GM12878 (cell line): ENCODE measurements at regions of chr9 and their contacts with region 1.

Region 1: DNA sequence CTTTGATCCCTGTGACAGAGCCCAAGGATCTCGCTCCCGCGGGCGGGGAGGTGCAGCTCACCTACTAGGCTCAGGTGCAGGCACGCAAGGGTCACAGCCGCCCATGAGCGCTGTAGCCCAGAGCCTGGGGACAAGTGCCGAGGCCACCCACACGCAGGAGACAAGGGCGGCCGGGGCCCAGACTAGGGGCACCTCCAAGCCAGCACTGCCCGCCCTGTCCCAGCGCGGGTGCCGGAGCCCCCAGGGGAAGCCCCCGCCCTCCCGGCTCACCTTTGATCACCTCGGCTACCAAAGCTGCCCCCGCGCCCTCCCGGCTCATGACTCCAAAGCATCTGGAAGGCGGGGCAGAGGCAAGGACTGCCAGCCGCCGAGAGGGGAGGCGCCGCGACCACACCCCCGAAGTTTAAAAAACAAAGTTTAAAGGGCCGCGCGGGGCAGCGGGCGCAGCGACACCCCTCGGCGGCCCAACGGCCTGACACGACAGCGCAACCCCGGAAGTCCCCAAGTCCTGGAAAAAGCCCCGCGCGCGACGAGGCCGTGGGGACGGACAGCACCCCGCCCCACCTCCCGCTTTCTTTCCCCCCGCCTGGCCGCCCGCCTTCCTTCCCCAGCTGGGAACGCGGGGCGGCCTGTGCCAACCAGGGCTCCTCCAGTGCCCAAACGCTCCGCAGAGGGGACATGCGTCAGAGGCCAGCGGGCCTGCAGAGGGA is 53.0 kb downstream of the CDC14B start:
- DNase-seq: no peak
- ATAC-seq: peak; percentile 91
- H3K4me3 ChIP-seq: peak overlapping the region; percentile 80
- H3K27ac ChIP-seq: peak overlapping the region; percentile 46
- H3K4me1 ChIP-seq: peaks cover 3% of the 10 kb centered on the region
- H3K27me3 ChIP-seq: no peaks in the 10 kb centered on the region
- CTCF ChIP-seq: peak; percentile 63 to 77 (median 75)
- EP300 ChIP-seq: no peak
- POLR2A ChIP-seq: peak; percentile 81
- RAD21 ChIP-seq: peak; percentile 57

Region 2: GRCh38 chr9:96441798-96442445 is 124.7 kb before region 1 on chr9:
- CTCF ChIA-PET with region 1: interaction called, 20 read pairs
- POLR2A ChIA-PET with region 1: no interaction called
- RAD21 ChIA-PET with region 1: interaction called, 13 read pairs
- SMC1A ChIA-PET with region 1: interaction called, 7 read pairs
- in situ Hi-C with region 1: no loop called
- intact Hi-C with region 1: no loop called
- DNase-seq: no peak
- ATAC-seq: peak; percentile 85
- H3K4me3 ChIP-seq: no peak overlapping the region
- H3K27ac ChIP-seq: no peak overlapping the region
- H3K4me1 ChIP-seq: no peaks in the 10 kb centered on the region
- H3K27me3 ChIP-seq: no peaks in the 10 kb centered on the region
- CTCF ChIP-seq: peak; percentile 68 to 72 (median 71)
- EP300 ChIP-seq: no peak
- POLR2A ChIP-seq: no peak
- RAD21 ChIP-seq: peak; percentile 84

Region 3: DNA sequence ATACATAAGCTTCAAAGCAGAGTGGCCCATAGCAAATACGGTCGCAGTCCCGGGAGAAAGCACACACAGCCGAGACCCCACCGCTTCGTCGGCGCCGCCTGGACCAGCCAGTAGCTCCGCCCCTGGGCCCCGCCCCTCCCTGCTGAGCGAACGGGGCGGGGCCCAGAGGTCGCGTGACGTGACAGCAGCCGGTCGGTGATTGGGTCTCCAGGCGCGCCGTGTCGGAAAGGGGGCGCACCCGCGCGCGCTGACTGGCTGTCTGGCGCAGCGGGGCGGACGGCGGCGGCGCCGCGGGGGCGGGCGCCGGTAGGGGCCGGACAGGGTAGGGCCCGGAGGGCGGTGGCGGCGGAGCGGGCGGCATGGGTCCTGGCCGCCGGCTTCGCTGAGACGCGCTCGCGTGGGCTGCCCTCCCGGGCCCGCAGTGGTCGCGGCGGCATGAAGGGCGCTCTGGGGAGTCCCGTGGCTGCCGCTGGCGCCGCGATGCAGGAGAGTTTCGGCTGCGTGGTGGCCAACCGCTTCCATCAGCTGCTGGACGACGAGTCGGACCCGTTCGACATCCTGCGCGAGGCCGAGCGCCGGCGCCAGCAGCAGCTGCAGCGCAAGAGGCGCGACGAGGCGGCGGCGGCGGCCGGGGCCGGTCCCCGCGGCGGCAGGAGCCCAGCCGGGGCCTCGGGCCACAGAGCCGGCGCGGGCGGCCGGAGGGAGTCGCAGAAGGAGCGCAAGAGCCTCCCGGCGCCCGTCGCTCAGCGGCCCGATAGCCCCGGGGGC is 116.6 kb before region 1 on chr9 and contains the start of gene HABP4:
- CTCF ChIA-PET with region 1: interaction called, 14 read pairs
- POLR2A ChIA-PET with region 1: interaction called, 11 read pairs
- RAD21 ChIA-PET with region 1: interaction called, 30 read pairs
- SMC1A ChIA-PET with region 1: interaction called, 38 read pairs
- in situ Hi-C with region 1: no loop called
- intact Hi-C with region 1: loop called (anchors 2 kb)
- DNase-seq: peak; percentile 48
- ATAC-seq: peak; percentile 99
- H3K4me3 ChIP-seq: peak within 1 kb of the TSS; percentile 68
- H3K27ac ChIP-seq: no peak within 1 kb of the TSS
- H3K4me1 ChIP-seq: peaks cover 6% of the 10 kb centered on the region
- H3K27me3 ChIP-seq: peaks cover 0 to 3% of the 10 kb centered on the region in 2 experiments; a peak in 1 of 4 replicates
- CTCF ChIP-seq: no peak
- EP300 ChIP-seq: no peak
- POLR2A ChIP-seq: peak; percentile 78
- RAD21 ChIP-seq: no peak
- polyA plus RNA-seq, gene HABP4: 4.4 to 5.7 TPM

Region 4: GRCh38 chr9:96484521-96484931 is 82.1 kb before region 1 on chr9:
- CTCF ChIA-PET with region 1: interaction called, 4 read pairs
- POLR2A ChIA-PET with region 1: interaction called, 4 read pairs
- RAD21 ChIA-PET with region 1: interaction called, 5 read pairs
- SMC1A ChIA-PET with region 1: no interaction called
- in situ Hi-C with region 1: no loop called
- intact Hi-C with region 1: loop called (anchors 2 kb)
- DNase-seq: peak; percentile 56
- ATAC-seq: peak; percentile 98
- H3K4me3 ChIP-seq: no peak overlapping the region
- H3K27ac ChIP-seq: no peak overlapping the region; the same call in 1 of the 2 replicates
- H3K4me1 ChIP-seq: peaks cover 24% of the 10 kb centered on the region
- H3K27me3 ChIP-seq: no peaks in the 10 kb centered on the region
- CTCF ChIP-seq: no peak
- EP300 ChIP-seq: peak in 1 of 2 experiments; percentile 76; a peak in 2 of 4 replicates
- POLR2A ChIP-seq: no peak
- RAD21 ChIP-seq: no peak

Region 5: DNA sequence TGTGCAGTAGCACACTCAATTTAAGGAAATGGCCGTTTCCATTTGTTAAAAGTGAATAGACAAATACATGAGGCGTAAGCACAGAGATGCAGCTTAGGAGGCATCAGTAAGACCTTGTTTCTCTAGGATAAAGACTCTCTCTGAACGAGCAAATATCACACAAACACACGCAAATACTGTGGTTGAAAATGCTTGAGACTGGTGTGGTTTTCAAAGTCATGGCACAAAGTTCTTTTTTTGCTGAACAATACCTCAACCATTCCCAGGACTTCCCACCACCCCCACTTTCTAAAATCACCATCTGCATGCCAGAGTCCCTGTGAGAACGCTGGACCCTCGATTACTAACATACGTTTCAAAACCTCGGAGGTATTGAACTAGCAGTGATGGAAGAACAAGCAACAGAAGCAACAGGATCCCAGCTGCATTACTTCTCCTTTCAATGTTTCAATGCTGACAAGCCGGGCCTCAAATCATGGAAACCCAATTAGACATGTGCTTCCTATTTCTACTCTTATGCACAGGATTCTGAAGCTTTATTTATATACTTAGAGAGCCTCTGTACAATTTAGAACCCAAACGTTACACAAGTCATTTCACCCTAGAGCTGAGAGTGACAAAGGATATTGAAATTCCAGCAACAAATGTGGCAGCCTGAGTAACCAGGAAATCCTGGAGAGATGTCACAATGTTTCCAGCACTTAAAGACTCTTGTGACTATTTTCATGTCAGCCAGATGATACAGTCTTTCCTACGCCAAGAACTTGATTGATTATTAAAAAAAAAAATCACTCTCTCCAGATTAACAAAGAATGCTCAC is 10.9 kb before region 1 on chr9:
- CTCF ChIA-PET with region 1: interaction called, 17 read pairs
- POLR2A ChIA-PET with region 1: interaction called, 4 read pairs
- RAD21 ChIA-PET with region 1: interaction called, 8 read pairs
- SMC1A ChIA-PET with region 1: interaction called, 5 read pairs
- in situ Hi-C with region 1: no loop called
- intact Hi-C with region 1: no loop called
- DNase-seq: no peak
- ATAC-seq: peak; percentile 33
- H3K4me3 ChIP-seq: no peak overlapping the region
- H3K27ac ChIP-seq: no peak overlapping the region
- H3K4me1 ChIP-seq: no peaks in the 10 kb centered on the region
- H3K27me3 ChIP-seq: peaks cover 0 to 1% of the 10 kb centered on the region in 2 experiments; a peak in 1 of 4 replicates
- CTCF ChIP-seq: no peak
- EP300 ChIP-seq: no peak
- POLR2A ChIP-seq: no peak
- RAD21 ChIP-seq: no peak